ENCODE measurements at regions of chr18 and their contacts with region 1.

Region 1: GRCh38 chr18:59988098-59988706 is 88.4 kb downstream of the PMAIP1 start:
- DNase-seq: peak; percentile 38
- H3K4me3 ChIP-seq: peak overlapping the region in 1 of 2 experiments; percentile 14; a peak in 1 of 4 replicates
- H3K27ac ChIP-seq: no peak overlapping the region
- H3K4me1 ChIP-seq: no peaks in the 10 kb centered on the region; a peak in 1 of 4 replicates
- H3K27me3 ChIP-seq: no peaks in the 10 kb centered on the region
- CTCF ChIP-seq: peak; percentile 99
- EP300 ChIP-seq: no peak
- RAD21 ChIP-seq: peak; percentile 97

Region 2: GRCh38 chr18:59837586-59837985 is 150.6 kb before region 1 on chr18:
- CTCF ChIA-PET with region 1: interaction called, 25 read pairs
- POLR2A ChIA-PET with region 1: no interaction called
- DNase-seq: peak; percentile 64
- H3K4me3 ChIP-seq: no peak overlapping the region; a peak in 1 of 4 replicates
- H3K27ac ChIP-seq: no peak overlapping the region
- H3K4me1 ChIP-seq: peaks cover 2 to 5% of the 10 kb centered on the region in 2 experiments; a peak in 1 of 4 replicates
- H3K27me3 ChIP-seq: no peaks in the 10 kb centered on the region
- CTCF ChIP-seq: peak; percentile 97
- EP300 ChIP-seq: no peak
- RAD21 ChIP-seq: peak; percentile 87

Region 3: DNA sequence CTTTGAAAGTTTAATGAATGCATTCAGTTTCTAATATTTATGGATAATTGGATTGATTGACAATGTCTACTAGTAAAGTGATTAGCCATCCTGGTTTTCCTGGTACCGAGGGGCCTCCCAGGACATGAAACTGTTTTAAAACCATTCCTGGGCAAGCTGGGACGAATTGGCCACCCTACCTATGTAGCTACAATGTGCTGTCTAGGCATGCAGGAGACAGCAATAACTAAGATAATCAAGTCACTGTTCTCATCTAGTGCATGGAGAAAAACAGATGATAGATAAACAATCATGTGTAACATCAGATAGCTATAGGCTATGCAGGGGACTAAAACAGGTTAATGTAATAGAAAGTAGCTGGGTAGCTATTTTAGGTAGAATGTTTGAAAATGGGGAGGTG is 21.3 kb before region 1 on chr18:
- CTCF ChIA-PET with region 1: interaction called, 15 read pairs
- POLR2A ChIA-PET with region 1: no interaction called
- DNase-seq: no peak
- H3K4me3 ChIP-seq: no peak overlapping the region
- H3K27ac ChIP-seq: no peak overlapping the region
- H3K4me1 ChIP-seq: no peaks in the 10 kb centered on the region; a peak in 1 of 4 replicates
- H3K27me3 ChIP-seq: no peaks in the 10 kb centered on the region
- CTCF ChIP-seq: no peak
- EP300 ChIP-seq: no peak
- RAD21 ChIP-seq: no peak

Region 4: GRCh38 chr18:60549338-60549960 is 561.2 kb after region 1 on chr18:
- CTCF ChIA-PET with region 1: interaction called, 31 read pairs
- POLR2A ChIA-PET with region 1: no interaction called
- DNase-seq: peak; percentile 43
- H3K4me3 ChIP-seq: no peak overlapping the region; a peak in 1 of 4 replicates
- H3K27ac ChIP-seq: no peak overlapping the region; a peak in 1 of 4 replicates
- H3K4me1 ChIP-seq: no peaks in the 10 kb centered on the region
- H3K27me3 ChIP-seq: no peaks in the 10 kb centered on the region
- CTCF ChIP-seq: peak; percentile 95
- EP300 ChIP-seq: no peak
- RAD21 ChIP-seq: peak; percentile 99

Region 5: GRCh38 chr18:61502472-61502871 is 1514.3 kb after region 1 on chr18:
- CTCF ChIA-PET with region 1: interaction called, 35 read pairs
- POLR2A ChIA-PET with region 1: no interaction called
- DNase-seq: peak; percentile 69
- H3K4me3 ChIP-seq: peak overlapping the region in 1 of 2 experiments; percentile 20; a peak in 1 of 4 replicates
- H3K27ac ChIP-seq: no peak overlapping the region
- H3K4me1 ChIP-seq: no peaks in the 10 kb centered on the region
- H3K27me3 ChIP-seq: no peaks in the 10 kb centered on the region
- CTCF ChIP-seq: peak; percentile 84
- EP300 ChIP-seq: no peak
- RAD21 ChIP-seq: peak; percentile 97

Measured in SK-N-SH (cell line).